RWPE1 (cell line): ENCODE measurements at regions of chr9 and their contacts with region 1.

Region 1: DNA sequence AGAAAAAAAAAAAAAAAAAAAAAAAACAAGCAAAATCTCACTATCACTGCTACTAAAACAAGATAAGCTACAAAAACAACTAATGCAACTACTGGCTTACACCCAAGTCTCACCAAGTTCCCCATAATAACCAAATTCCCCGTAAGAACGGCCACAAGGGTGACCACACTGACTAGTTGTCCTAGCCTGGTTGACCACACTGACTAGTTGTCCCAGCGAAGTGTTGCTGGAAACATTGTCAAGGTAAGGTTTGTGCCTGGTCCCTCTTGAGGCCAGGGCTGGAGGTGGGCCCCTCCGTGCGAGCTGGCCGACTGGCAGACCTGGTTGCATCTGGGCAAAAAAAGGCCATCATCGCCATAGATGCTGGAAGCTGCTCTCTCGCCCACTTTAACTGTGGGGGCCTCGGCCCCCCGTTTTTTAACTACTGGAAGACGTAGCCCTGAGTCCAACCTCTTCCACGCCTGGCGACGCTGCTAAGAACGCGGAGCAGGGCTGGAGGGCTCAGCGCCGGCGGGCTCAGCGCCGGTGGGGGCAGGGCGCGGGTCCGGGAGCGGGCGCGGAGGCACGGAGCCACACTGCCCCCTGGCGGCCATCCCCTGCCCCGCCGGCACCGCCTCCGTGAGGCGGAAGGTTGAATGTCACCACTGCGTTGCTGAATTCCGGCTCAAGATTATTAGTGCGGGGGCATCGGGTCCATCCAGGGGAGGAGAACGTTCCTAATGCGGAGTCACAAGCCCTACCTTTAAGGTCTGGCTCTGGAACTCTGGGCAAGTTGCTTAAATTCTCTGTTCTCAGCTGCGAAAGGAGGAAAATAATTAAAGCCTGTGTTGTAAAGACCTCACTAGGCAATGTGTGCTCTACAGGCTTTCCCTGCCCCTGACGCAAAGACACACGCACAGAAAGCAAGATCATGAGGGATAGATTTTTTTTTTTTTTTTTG is 84.0 kb downstream of the HSD17B3 start:
- DNase-seq: peak; percentile 92
- H3K27ac ChIP-seq: peak overlapping the region; percentile 48
- CTCF ChIP-seq: peak; percentile 100

Region 2: DNA sequence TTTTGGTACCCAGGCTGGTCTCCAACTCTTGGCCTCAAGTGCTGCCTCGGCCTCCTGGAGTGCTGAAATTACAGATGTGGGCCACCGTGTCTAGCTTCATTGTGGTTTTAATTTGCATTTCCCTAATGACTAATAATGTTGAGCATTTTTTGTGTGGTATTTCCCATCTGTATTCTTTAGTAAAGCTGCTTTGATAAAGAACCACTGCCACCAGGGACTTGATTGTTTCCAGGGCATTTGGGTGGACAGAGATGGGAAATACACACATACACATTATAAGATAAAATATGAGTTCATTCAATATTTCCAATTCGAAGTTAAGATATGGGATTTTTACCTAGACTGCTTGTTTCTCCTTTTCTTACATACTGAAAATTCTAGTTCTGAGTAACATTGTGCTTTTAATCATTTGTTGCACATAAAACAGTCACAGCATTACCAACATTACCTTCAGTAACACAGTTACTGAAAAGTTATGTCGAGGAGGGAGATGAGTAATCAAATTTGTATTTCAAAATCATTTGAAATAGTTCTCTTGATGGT is 260.9 kb after region 1 on chr9:
- CTCF ChIA-PET with region 1: no interaction called
- POLR2A ChIA-PET with region 1: interaction called, 11 read pairs
- DNase-seq: no peak
- H3K27ac ChIP-seq: no peak overlapping the region
- CTCF ChIP-seq: no peak